Adrenal gland (tissue), 19 donors: ENCODE measurements at regions of chr19 and their contacts with region 1.

Region 1: GRCh38 chr19:35352448-35353304 is 5.0 kb downstream of the FFAR1 start:
- DNase-seq: peak; percentile 77 to 86 (median 79)
- H3K4me3 ChIP-seq: no peak overlapping the region
- H3K27ac ChIP-seq: no peak overlapping the region
- H3K4me1 ChIP-seq: no peaks in the 10 kb centered on the region
- H3K27me3 ChIP-seq: peaks cover 5% of the 10 kb centered on the region
- CTCF ChIP-seq: peak; percentile 75 to 95 (median 90)
- POLR2A ChIP-seq: no peak

Region 2: GRCh38 chr19:35262101-35262761 is 90.4 kb before region 1 on chr19:
- intact Hi-C with region 1: no loop called
- DNase-seq: peak in 6 of 7 donors; percentile 17 to 60 (median 38)
- H3K4me3 ChIP-seq: no peak overlapping the region
- H3K27ac ChIP-seq: no peak overlapping the region
- H3K4me1 ChIP-seq: peaks cover 11 to 33% of the 10 kb centered on the region in 2 donors
- H3K27me3 ChIP-seq: no peaks in the 10 kb centered on the region
- CTCF ChIP-seq: no peak
- POLR2A ChIP-seq: peak in 1 of 2 donors; percentile 12

Region 3: GRCh38 chr19:35389192-35389861 is 36.7 kb after region 1 on chr19:
- intact Hi-C with region 1: no loop called
- DNase-seq: peak in 2 of 7 donors; percentile 2 to 5
- H3K4me3 ChIP-seq: no peak overlapping the region
- H3K27ac ChIP-seq: no peak overlapping the region
- H3K4me1 ChIP-seq: no peaks in the 10 kb centered on the region
- H3K27me3 ChIP-seq: no peaks in the 10 kb centered on the region
- CTCF ChIP-seq: no peak
- POLR2A ChIP-seq: no peak

Region 4: DNA sequence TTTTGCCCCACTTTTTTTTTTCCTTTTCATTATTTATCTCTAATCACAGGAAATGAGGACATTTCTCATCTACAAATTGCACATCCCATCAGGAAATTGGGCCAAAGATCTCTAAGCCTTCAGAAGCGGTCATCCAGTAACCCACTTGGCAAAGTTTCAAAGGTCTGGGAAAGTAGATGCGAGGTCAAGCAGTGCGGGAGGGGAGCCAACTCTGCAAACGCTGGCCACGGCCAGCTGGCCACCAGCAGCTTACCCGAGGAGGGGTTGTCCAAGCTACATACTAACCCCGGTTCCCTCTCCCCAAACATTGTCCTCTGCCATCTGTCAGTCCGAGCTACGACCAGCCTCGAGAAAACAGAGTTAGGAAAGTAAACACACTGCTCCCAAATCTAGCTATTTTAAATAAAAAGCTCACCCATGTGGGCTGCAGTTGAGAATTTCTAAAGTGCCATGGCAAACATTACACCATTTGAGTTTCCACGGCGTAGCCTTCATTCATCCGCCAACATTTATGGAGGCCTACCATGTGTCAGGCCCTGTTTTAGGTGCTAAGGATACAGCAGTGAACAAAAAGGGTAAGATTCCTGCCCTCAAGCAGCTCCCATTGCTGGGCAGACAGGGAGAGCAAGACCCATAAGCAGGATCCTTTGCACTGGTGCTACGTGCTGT is 106.9 kb after region 1 on chr19:
- intact Hi-C with region 1: loop called in 1 of 2 experiments (anchors 2 kb)
- DNase-seq: peak; percentile 62 to 88 (median 81)
- H3K4me3 ChIP-seq: no peak overlapping the region
- H3K27ac ChIP-seq: peak overlapping the region in 1 of 5 donors; percentile 81
- H3K4me1 ChIP-seq: peaks cover 13 to 29% of the 10 kb centered on the region in 2 donors
- H3K27me3 ChIP-seq: no peaks in the 10 kb centered on the region
- CTCF ChIP-seq: no peak
- POLR2A ChIP-seq: no peak

Region 5: GRCh38 chr19:35468637-35469036 is 116.0 kb after region 1 on chr19:
- intact Hi-C with region 1: loop called (anchors 2 to 5 kb)
- DNase-seq: peak; percentile 53 to 81 (median 66)
- H3K4me3 ChIP-seq: no peak overlapping the region
- H3K27ac ChIP-seq: no peak overlapping the region
- H3K4me1 ChIP-seq: no peaks in the 10 kb centered on the region
- H3K27me3 ChIP-seq: no peaks in the 10 kb centered on the region
- CTCF ChIP-seq: peak; percentile 60 to 84 (median 75)
- POLR2A ChIP-seq: no peak

Region 6: DNA sequence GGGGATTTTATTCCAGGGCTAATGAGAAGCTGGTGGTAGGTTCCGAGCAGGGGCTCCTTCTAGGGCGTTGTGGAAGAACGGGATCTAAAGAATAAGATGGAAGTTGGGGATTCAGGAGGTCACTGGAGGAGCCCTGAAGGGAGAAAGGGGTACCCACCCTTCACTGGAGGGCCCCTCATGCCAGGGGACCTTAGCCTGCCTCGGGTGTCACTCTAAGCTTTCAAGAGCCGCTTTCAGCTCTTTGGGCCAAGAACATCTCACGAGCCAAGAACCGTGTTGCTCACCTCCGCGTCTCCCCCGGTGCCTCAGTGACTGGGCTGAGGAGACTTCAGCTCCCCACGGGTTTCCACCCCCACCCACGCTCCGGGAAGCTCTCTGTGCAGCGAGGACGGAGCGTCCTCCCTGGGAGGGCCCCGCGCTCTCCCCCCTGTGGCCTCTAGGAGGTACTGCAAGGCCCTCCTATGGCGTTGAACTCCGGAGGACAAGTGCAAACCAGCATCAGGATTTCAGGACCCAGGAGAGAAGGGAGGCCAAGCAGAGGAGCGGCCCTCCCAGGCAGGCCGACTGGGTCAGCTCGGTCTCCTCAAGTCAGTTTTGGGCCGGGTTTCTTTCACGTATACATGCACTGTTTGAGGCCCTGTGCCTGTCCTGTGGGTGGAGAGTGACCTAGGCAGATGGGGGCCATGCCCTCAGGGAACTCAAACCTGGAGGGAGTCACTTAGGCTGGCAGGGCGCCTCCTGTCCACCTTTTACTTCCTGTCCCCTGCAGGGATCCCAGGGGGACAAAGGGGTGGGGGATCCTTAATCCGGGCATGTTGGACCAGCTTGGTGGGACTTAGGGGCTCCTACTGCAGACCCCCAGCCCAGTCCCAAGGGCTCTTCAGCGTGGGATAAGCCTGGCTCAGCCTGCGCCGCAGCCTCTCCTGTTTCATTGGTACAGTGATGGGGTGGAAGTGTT is 142.7 kb after region 1 on chr19:
- intact Hi-C with region 1: loop called in 1 of 2 experiments (anchors 2 kb)
- DNase-seq: peak; percentile 60 to 79 (median 67)
- H3K4me3 ChIP-seq: no peak overlapping the region
- H3K27ac ChIP-seq: no peak overlapping the region
- H3K4me1 ChIP-seq: peaks cover 0 to 5% of the 10 kb centered on the region in 2 donors
- H3K27me3 ChIP-seq: no peaks in the 10 kb centered on the region
- CTCF ChIP-seq: peak; percentile 90 to 99 (median 94)
- POLR2A ChIP-seq: no peak